ENCODE measurements at regions of chr2 and their contacts with region 1.

Region 1: DNA sequence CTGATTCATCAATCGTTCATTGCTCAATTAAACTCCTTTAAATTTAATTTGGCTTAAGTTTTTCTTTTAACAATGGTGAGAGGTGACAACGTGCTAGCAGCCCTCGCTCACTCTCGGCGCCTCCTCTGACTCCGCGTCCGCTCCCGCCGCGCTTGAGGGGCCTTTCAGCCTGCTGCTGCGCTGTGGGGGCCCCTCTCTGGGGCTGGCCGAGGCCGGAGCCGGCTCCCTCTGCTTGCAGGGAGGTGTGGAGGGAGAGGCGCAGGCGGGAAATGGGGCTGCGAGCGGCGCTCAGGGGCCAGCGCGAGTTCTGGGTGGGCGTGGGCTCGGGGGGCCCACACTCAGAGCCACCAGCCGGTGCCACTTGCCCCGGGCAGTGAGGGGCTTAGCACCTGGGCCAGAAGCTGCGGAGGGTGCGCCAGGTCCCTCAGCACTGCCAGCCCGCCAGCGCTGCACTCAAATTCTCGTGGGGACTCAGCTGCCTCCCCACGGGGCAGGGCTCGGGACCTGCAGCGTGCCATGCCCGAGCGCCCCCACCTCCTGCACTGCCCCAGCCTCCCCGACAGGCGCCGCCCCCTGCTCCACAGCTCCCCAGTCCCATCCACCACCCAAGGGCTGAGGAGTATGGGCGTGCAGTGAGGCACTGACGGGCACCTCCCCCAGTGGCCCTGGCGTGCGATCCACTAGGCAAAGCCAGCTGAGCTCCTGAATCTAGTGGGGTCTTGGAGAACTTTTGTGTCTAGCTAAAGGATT is 19.6 kb downstream of the ANKMY1 start:
- DNase-seq: no peak
- H3K4me3 ChIP-seq: no peak overlapping the region
- H3K27ac ChIP-seq: no peak overlapping the region
- H3K4me1 ChIP-seq: no peaks in the 10 kb centered on the region
- H3K27me3 ChIP-seq: no peaks in the 10 kb centered on the region
- CTCF ChIP-seq: no peak

Region 2: GRCh38 chr2:238771218-238771617 is 1767.0 kb before region 1 on chr2:
- CTCF ChIA-PET with region 1: no interaction called
- dilution Hi-C with region 1: no loop called
- in situ Hi-C with region 1: no loop called
- intact Hi-C with region 1: no loop called
- DNase-seq: no peak
- H3K4me3 ChIP-seq: no peak overlapping the region
- H3K27ac ChIP-seq: no peak overlapping the region
- H3K4me1 ChIP-seq: no peaks in the 10 kb centered on the region
- H3K27me3 ChIP-seq: no peaks in the 10 kb centered on the region
- CTCF ChIP-seq: peak; percentile 6 to 32

Region 3: GRCh38 chr2:240604291-240604938 is 66.2 kb after region 1 on chr2:
- CTCF ChIA-PET with region 1: no interaction called
- dilution Hi-C with region 1: loop called (anchors 5 kb)
- in situ Hi-C with region 1: no loop called
- intact Hi-C with region 1: no loop called
- DNase-seq: no peak
- H3K4me3 ChIP-seq: no peak overlapping the region
- H3K27ac ChIP-seq: no peak overlapping the region
- H3K4me1 ChIP-seq: no peaks in the 10 kb centered on the region
- H3K27me3 ChIP-seq: no peaks in the 10 kb centered on the region
- CTCF ChIP-seq: no peak